Naive thymus-derived CD4-positive, alpha-beta T cell (primary cell): ENCODE measurements at regions of chr17 and their contacts with region 1.

Region 1: GRCh38 chr17:63842540-63843386 is at the start of gene SMARCD2:
- DNase-seq: peak; percentile 94 to 99 (median 98)
- ATAC-seq: peak; percentile 96
- H3K4me3 ChIP-seq: peak within 1 kb of the TSS; percentile 87
- H3K4me3 Mint-ChIP-seq: peak within 1 kb of the TSS; percentile 92 to 98 (median 95)
- H3K27ac ChIP-seq: peak within 1 kb of the TSS; percentile 96
- H3K27ac Mint-ChIP-seq: peak within 1 kb of the TSS; percentile 87 to 95 (median 92)
- H3K4me1 ChIP-seq: peaks cover 34 to 36% of the 10 kb centered on the region in 2 donors
- H3K4me1 Mint-ChIP-seq: peaks cover 27 to 52% (median 44%) of the 10 kb centered on the region in 7 donors
- H3K27me3 ChIP-seq: no peaks in the 10 kb centered on the region
- H3K27me3 Mint-ChIP-seq: no peaks in the 10 kb centered on the region
- total RNA-seq, gene SMARCD2: 102 to 148 (median 109) TPM

Region 2: DNA sequence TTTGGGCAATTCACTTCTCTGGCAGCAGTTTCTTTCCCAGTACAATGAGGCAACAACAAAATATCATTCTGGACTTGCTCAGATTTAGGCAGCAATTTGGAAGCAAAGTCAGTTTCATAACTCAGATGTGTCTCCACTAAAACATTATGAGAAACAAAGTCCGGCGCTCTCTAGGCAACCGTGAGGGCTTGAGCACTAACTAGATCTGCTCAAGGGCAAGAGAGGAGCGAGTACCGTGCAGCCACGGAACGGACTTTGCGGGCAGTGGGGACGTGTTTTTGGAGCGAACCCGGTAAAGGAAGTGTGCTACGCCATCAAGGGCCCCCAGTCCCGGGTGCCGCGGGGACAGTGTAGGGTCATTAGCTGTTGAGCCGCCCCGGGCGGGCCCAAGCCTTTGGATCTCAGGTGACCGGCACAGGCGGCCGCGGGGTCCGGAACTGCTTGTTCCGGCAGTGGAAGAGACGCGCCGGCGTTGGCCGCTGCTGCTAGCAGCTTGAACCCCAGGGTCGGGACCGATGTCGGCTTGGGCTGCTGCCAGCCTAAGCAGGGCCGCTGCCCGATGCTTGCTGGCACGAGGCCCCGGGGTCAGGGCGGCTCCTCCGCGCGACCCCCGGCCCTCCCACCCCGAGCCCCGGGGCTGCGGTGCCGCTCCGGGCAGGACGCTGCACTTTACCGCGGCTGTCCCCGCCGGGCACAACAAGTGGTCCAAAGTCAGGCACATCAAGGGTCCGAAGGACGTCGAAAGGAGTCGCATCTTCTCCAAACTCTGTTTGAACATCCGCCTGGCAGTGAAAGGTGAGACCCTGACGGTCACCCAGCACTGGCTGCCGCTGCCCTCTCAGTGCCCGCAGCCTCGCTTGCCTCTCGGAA is 242.0 kb before region 1 on chr17 and contains the start of gene TACO1:
- CTCF ChIA-PET with region 1: no interaction called
- POLR2A ChIA-PET with region 1: interaction called, 4 read pairs
- intact Hi-C with region 1: loop called in 1 of 2 experiments (anchors 10 kb)
- DNase-seq: peak; percentile 54 to 83 (median 71)
- ATAC-seq: peak; percentile 96
- H3K4me3 ChIP-seq: peak within 1 kb of the TSS; percentile 68
- H3K4me3 Mint-ChIP-seq: peak within 1 kb of the TSS; percentile 92 to 97 (median 95)
- H3K27ac ChIP-seq: peak within 1 kb of the TSS; percentile 86
- H3K27ac Mint-ChIP-seq: peak within 1 kb of the TSS; percentile 93 to 98 (median 97)
- H3K4me1 ChIP-seq: peaks cover 17 to 34% of the 10 kb centered on the region in 2 donors
- H3K4me1 Mint-ChIP-seq: peaks cover 19 to 38% (median 25%) of the 10 kb centered on the region in 7 donors
- H3K27me3 ChIP-seq: no peaks in the 10 kb centered on the region
- H3K27me3 Mint-ChIP-seq: no peaks in the 10 kb centered on the region
- total RNA-seq, gene TACO1: 11.1 to 20.3 (median 15.2) TPM

Region 3: DNA sequence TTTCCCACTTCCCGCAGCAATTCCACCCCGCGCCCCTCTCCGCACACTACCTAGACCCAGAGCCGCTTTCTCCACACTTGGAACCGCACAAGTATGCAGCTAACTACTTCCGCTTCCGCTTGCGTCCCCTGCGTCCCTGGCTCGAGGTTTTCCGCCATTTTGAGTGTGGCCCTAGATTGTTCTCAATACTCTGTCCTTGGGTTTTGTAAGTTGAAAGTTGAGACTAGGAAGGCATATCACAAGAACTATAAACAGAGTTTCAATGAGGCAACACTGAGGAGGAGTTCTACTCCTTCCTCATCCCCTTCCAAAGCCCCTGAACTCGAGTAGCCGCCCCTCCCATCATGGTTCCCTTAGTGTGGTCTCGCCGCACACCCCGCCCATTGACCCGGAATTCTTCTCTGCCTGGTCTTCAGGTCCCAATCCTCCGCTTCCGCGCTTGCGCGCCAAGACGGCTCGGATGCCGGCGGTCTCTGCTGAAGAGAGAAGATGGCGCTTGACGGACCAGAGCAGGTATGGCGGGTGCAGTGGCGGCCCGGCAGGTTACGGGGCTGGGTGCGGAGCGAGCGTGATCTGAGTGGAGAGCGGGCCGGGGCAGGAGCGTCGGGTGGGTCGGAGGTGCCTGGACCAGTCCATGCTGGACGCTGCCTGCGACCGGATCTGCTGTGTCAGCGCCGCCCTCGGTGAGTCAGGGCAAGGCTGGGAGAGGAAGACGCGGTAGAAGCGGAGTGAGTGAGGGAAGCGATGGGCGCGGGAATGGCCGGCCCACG is 15.6 kb before region 1 on chr17 and contains the starts of genes FTSJ3 and PSMC5:
- CTCF ChIA-PET with region 1: interaction called, 4 read pairs
- POLR2A ChIA-PET with region 1: interaction called, 204 read pairs
- intact Hi-C with region 1: loop called (anchors 1 kb)
- DNase-seq: peak; percentile 89 to 98 (median 96)
- ATAC-seq: peak; percentile 97
- H3K4me3 ChIP-seq: peak within 1 kb of the TSS; percentile 89
- H3K4me3 Mint-ChIP-seq: peak within 1 kb of the TSS; percentile 93 to 100 (median 98)
- H3K27ac ChIP-seq: peak within 1 kb of the TSS; percentile 87
- H3K27ac Mint-ChIP-seq: peak within 1 kb of the TSS; percentile 98 to 100 (median 99)
- H3K4me1 ChIP-seq: peaks cover 27 to 46% of the 10 kb centered on the region in 2 donors
- H3K4me1 Mint-ChIP-seq: peaks cover 43 to 82% (median 77%) of the 10 kb centered on the region in 7 donors
- H3K27me3 ChIP-seq: no peaks in the 10 kb centered on the region
- H3K27me3 Mint-ChIP-seq: no peaks in the 10 kb centered on the region
- total RNA-seq, gene FTSJ3: 38.1 to 66.2 (median 55.8) TPM
- total RNA-seq, gene PSMC5: 68.4 to 153 (median 105) TPM